Brain microvascular endothelial cell (primary cell): ENCODE measurements at regions of chr16 and their contacts with region 1.

Region 1: DNA sequence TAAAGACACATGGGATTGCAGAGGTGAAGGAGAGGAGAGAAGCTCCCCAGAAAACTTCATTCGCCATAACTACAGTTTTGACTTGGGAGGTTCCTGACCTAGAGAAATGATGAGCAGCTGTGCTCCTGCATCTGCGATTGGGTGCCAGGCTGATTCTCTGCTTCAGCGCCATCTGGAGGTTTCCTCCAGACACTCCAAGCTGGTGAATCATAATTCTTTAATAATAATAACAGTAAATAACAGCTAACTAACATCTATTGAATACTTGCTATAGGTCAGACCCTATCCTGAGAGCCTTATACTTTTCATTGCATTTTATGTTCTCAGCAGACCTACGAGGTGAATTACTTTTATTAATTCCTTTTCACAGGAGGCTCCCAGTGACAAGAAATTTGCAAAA is 575.8 kb downstream of the TOX3 start:
- DNase-seq: peak; percentile 45
- H3K4me3 ChIP-seq: no peak overlapping the region
- H3K27ac ChIP-seq: no peak overlapping the region
- H3K27me3 ChIP-seq: no peaks in the 10 kb centered on the region
- CTCF ChIP-seq: peak; percentile 69

Region 2: GRCh38 chr16:51818342-51818944 is 152.7 kb before region 1 on chr16:
- in situ Hi-C with region 1: loop called (anchors 25 kb)
- DNase-seq: peak; percentile 82
- H3K4me3 ChIP-seq: no peak overlapping the region
- H3K27ac ChIP-seq: no peak overlapping the region
- H3K27me3 ChIP-seq: no peaks in the 10 kb centered on the region
- CTCF ChIP-seq: peak; percentile 92